Activated CD4-positive, alpha-beta T cell treated with anti-CD3 and anti-CD28 coated beads, Interleukin-2, amount 10 ng/mL, durations not matched to agents 7 days and 5 days (primary cell): ENCODE measurements at regions of chr15 and their contacts with region 1.

Region 1: GRCh38 chr15:78761891-78762385 is 49.3 kb downstream of the ADAMTS7 start:
- DNase-seq: no peak
- H3K4me3 Mint-ChIP-seq: peak overlapping the region; percentile 38
- H3K27ac Mint-ChIP-seq: peak overlapping the region; percentile 93
- H3K4me1 Mint-ChIP-seq: peaks cover 26% of the 10 kb centered on the region
- H3K27me3 Mint-ChIP-seq: no peaks in the 10 kb centered on the region

Region 2: GRCh38 chr15:78750566-78750965 is 11.4 kb before region 1 on chr15:
- CTCF ChIA-PET with region 1: interaction called, 15 read pairs
- POLR2A ChIA-PET with region 1: no interaction called
- DNase-seq: no peak
- H3K4me3 Mint-ChIP-seq: no peak overlapping the region
- H3K27ac Mint-ChIP-seq: no peak overlapping the region
- H3K4me1 Mint-ChIP-seq: peaks cover 5% of the 10 kb centered on the region
- H3K27me3 Mint-ChIP-seq: no peaks in the 10 kb centered on the region

Region 3: GRCh38 chr15:78778422-78778821 is 16.5 kb after region 1 on chr15:
- CTCF ChIA-PET with region 1: no interaction called
- POLR2A ChIA-PET with region 1: no interaction called
- DNase-seq: no peak
- H3K4me3 Mint-ChIP-seq: no peak overlapping the region
- H3K27ac Mint-ChIP-seq: no peak overlapping the region
- H3K4me1 Mint-ChIP-seq: no peaks in the 10 kb centered on the region
- H3K27me3 Mint-ChIP-seq: no peaks in the 10 kb centered on the region